Activated CD4-positive, alpha-beta T cell treated with anti-CD3 and anti-CD28 coated beads, Interleukin-2, amount 10 ng/mL, durations not matched to agents 24 days and 14 days (primary cell): ENCODE measurements at regions of chr2 and their contacts with region 1.

Region 1: DNA sequence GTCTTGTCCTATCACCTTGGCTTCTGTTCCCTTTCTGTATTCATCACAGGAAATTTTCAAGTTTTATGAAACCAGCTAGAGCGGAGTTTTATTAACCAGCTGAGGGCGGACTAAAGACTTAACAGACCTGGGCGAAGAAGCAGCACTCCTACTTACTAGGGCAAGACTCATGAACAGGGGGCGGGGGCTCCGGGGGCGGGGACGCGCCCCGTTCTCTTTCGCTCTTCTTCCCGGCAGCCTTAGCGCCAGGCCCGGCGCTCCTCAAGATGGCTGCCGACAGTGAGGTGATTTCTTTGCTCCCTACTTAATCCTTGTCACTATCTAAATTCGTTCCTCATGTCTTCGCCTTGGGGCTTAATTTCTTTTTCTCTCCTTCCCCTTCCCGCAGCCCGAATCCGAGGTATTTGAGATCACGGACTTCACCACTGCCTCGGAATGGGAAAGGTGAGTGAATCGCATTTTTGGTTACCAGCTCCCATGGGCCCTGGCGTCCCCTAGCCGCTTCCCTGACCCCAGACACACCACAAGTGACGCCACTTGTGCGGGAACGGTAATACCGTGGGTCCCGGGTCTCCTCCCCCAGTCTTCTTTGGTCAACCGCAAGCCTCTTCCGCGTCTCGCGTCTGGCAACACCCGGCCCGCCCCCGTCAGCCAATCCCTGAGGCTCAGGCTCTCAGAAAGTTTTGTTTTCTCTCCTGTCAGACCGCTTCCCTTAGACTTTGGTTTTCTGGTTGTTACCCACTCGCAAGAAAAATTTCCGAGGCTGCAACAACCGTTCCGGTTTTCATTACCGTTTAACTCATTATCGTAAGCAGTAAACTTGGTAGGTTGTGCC is at the start of gene RAB3GAP1:
- DNase-seq: peak; percentile 98
- H3K4me3 Mint-ChIP-seq: peak within 1 kb of the TSS; percentile 94
- H3K27ac Mint-ChIP-seq: peak within 1 kb of the TSS; percentile 100
- H3K4me1 Mint-ChIP-seq: peaks cover 38% of the 10 kb centered on the region
- H3K27me3 Mint-ChIP-seq: peaks cover 2% of the 10 kb centered on the region
- total RNA-seq, gene RAB3GAP1: 24.2 and 26.3 TPM in 2 replicates

Region 2: GRCh38 chr2:134918526-134919340 is 133.5 kb before region 1 on chr2 and contains the start of gene CCNT2:
- intact Hi-C with region 1: loop called (anchors 1 kb)
- DNase-seq: peak; percentile 100
- H3K4me3 Mint-ChIP-seq: peak within 1 kb of the TSS; percentile 96
- H3K27ac Mint-ChIP-seq: peak within 1 kb of the TSS; percentile 97
- H3K4me1 Mint-ChIP-seq: peaks cover 23% of the 10 kb centered on the region
- H3K27me3 Mint-ChIP-seq: peaks cover 6% of the 10 kb centered on the region
- total RNA-seq, gene CCNT2: 46.0 and 48.5 TPM in 2 replicates

Region 3: GRCh38 chr2:135099802-135100483 is 47.7 kb after region 1 on chr2:
- intact Hi-C with region 1: loop called (anchors 10 kb)
- DNase-seq: no peak
- H3K4me3 Mint-ChIP-seq: peak overlapping the region; percentile 25
- H3K27ac Mint-ChIP-seq: no peak overlapping the region
- H3K4me1 Mint-ChIP-seq: peaks cover 24% of the 10 kb centered on the region
- H3K27me3 Mint-ChIP-seq: no peaks in the 10 kb centered on the region

Region 4: DNA sequence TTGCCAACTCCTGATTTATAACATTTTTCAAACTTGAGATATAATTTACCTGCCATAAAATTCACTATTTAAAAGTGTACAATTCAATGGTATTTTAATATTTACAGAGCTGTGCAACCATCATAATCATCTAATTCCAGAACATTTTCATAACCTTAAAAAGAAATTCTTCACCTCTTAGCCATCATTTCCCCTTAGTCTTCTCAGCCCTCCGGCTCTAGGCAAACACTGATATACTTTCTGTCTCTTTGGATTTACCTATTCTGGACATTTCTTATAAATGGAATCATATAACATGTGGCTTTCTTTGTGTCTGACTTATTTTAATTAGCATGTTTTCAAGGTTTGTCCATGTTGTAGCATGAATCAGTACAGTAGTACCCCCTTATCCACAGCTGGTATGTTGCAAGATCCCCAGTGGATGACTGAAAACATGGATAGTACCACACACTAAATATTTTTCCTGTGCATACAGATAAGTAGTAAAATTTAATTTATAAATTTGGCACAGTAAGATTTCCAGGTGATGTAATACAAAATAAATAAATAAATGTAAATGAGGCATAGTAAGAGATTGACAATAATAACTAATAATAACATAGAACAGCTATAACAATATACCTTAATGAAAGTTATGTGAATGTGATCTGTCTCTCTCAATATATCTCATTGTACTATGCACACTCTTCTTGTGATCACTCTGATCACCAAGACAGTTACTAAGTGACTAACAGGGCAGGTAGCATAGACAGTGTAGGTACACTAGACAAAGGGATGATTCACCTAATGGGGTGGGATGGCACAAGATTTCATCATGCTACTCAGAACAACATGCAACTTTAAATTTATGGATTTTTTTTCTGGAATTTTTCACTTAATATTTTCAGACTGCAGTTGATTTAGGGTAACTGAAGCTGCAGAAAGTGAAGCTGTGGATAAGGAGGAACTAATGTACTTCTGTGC is 72.9 kb after region 1 on chr2:
- intact Hi-C with region 1: no loop called
- DNase-seq: no peak
- H3K4me3 Mint-ChIP-seq: no peak overlapping the region
- H3K27ac Mint-ChIP-seq: no peak overlapping the region
- H3K4me1 Mint-ChIP-seq: no peaks in the 10 kb centered on the region
- H3K27me3 Mint-ChIP-seq: no peaks in the 10 kb centered on the region

Region 5: GRCh38 chr2:135531231-135532228 is 479.3 kb after region 1 on chr2 and contains the start of gene R3HDM1:
- intact Hi-C with region 1: loop called (anchors 1 kb)
- DNase-seq: peak; percentile 97
- H3K4me3 Mint-ChIP-seq: no peak within 1 kb of the TSS
- H3K27ac Mint-ChIP-seq: no peak within 1 kb of the TSS
- H3K4me1 Mint-ChIP-seq: peaks cover 29% of the 10 kb centered on the region
- H3K27me3 Mint-ChIP-seq: no peaks in the 10 kb centered on the region
- total RNA-seq, gene R3HDM1: 65.8 and 78.3 TPM in 2 replicates

Region 6: DNA sequence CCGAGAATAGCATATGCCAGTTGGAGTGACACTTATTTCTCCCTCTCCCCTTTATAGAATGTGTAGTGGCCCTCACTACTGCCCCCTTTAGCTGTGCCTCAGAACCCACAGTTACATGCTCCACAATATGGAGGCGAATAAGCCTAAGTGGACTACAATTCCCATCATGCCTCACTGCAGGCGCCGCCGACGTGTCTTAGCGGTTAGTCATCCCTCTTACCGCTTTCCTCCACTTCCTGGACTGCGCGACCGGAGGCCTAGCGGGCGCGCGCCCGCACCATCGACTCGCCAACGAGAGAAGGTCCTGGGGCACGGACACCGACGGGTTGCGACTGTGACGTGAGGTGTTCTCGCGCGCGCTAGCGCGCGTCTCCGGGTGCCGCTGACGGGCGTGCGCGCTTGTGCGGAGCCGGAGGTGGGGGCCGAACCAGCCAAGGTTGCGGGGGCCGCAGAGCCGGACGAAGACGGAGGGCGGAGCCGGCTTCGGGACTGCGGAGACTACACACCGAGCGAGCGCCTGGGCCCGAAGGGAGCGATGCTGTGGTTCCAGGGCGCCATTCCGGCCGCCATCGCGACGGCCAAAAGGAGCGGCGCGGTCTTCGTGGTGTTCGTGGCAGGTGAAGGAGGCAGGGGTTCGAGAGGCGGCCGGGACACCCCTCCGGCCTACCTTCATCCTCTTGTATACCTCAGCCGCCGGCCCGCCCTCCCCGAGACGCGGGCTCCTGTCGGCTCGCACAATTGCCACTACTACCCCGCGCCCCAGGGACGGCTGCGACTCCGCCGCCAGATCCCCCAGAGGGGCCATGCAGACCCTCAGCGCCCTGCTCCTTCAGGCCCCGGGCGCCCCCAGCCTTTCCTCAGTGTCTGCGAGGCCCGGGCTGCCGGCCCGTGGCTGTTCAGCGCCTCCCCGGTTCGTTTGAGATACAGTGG is 689.4 kb after region 1 on chr2 and contains the start of gene UBXN4:
- intact Hi-C with region 1: loop called (anchors 1 kb)
- DNase-seq: peak; percentile 96
- H3K4me3 Mint-ChIP-seq: peak within 1 kb of the TSS; percentile 99
- H3K27ac Mint-ChIP-seq: peak within 1 kb of the TSS; percentile 100
- H3K4me1 Mint-ChIP-seq: peaks cover 36% of the 10 kb centered on the region
- H3K27me3 Mint-ChIP-seq: no peaks in the 10 kb centered on the region
- total RNA-seq, gene UBXN4: 116 and 127 TPM in 2 replicates

Region 7: DNA sequence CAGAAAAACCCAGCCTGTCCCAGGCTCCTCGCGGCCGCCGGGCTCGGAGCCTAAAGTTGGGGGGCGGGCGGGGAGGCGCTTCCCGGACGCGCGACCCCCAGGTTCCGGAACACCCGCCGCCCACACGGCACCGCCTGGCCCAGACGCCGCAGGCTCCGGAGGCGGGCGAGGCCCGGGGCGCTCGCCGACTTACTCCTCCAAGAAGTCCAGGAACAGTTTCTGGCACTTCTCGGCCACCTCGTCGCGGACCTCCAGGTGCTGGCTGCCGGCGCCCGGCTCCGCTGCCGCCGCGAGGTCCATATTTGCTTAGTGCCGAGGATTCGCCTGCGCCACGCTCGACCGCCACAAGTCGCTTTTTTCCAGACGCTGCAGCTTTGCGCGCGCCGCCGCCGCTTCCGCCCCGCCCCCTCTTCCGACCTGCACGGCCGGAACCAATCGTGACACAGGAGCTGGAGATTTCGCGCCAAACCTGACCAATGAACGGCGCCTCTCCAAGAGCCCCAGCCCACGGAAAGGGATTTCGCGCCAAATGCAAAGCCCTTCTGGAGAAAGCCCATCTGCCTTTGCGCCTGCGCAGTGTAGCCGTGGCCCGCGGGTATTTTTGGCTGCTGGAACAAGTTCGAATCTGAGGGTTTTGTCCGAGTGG is 823.9 kb after region 1 on chr2 and contains the start of gene MCM6:
- intact Hi-C with region 1: loop called (anchors 2 kb)
- DNase-seq: peak; percentile 100
- H3K4me3 Mint-ChIP-seq: peak within 1 kb of the TSS; percentile 83
- H3K27ac Mint-ChIP-seq: peak within 1 kb of the TSS; percentile 97
- H3K4me1 Mint-ChIP-seq: peaks cover 31% of the 10 kb centered on the region
- H3K27me3 Mint-ChIP-seq: peaks cover 2% of the 10 kb centered on the region
- total RNA-seq, gene MCM6: 196 and 197 TPM in 2 replicates